ENCODE measurements at regions of chr15 and their contacts with region 1.

Region 1: DNA sequence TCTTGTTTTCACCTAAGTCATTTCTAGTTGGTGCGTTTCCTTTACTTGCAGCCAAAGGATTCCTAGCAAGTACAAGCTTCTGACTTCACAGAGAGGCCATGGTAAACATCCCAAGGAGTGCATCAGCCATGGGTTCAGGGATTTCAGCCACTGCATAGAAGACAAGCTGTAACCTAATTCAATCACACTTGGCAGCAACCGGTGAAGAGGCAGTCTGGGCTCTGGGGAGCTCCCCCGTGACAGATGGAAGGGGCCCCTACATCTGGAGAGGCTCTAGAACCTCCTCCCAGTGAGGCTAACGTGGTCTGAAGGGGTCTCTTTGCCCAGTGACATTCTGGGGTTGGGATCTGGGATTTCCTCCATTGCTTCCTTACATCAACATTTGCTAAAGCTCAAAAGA is 8.4 kb upstream of the SNRPA1 start:
- DNase-seq: no peak
- H3K4me3 ChIP-seq: no peak overlapping the region
- CTCF ChIP-seq: no peak

Region 2: DNA sequence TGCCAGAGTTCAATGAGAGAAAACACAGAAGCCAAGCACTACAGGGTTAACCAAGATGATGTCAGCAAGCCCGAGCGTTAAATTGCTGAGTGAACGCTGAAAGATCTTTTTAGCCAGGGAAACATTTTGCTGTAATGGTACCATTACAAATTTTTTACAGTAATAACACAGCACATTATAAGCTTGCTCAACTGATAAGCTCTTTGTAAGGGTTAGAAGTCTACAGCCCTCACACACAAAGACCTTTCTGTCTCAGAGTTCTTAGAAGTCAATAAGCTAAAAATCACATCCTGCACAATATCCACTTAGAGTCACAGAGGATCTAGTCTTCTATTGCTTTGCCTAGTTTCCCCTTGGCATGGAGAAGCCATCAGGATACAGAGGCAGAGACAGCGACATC is 81.5 kb before region 1 on chr15:
- CTCF ChIA-PET with region 1: no interaction called
- POLR2A ChIA-PET with region 1: no interaction called
- DNase-seq: no peak
- H3K4me3 ChIP-seq: no peak overlapping the region
- CTCF ChIP-seq: no peak

Region 3: DNA sequence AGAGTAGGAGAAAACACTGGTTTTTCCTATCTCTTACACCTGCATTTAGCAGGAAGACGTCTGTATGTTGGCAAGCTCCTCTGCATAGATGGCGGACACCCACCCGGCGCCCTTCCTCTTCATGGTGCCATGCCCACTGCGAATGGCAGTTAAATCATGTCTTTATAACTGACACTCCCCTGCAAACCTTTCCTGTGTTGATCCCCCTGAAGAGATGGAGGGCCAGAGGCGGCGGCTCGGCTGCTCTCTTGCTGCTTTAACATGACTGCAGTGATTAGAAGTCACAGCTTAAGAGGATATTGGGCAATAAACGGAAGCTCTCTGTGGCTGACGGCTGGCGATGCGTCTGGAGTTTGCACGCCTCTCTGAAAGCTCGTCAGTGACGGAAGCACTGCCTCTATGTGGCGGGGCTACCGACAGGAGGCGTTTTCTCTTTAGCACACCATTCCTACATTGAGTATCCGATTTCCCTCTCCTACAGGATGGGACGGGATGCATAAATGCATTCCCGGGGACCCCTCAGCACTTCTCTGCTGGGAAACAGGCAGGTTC is 17.2 kb after region 1 on chr15:
- CTCF ChIA-PET with region 1: interaction called, 18 read pairs
- POLR2A ChIA-PET with region 1: no interaction called
- DNase-seq: no peak
- H3K4me3 ChIP-seq: no peak overlapping the region; the same call in 1 of the 2 replicates
- CTCF ChIP-seq: peak; percentile 38

Region 4: GRCh38 chr15:101342056-101342455 is 38.6 kb after region 1 on chr15:
- CTCF ChIA-PET with region 1: no interaction called
- POLR2A ChIA-PET with region 1: no interaction called
- DNase-seq: no peak
- H3K4me3 ChIP-seq: no peak overlapping the region
- CTCF ChIP-seq: no peak

Region 5: GRCh38 chr15:101501703-101502373 is 198.4 kb after region 1 on chr15:
- CTCF ChIA-PET with region 1: interaction called, 12 read pairs
- POLR2A ChIA-PET with region 1: no interaction called
- DNase-seq: no peak
- H3K4me3 ChIP-seq: no peak overlapping the region
- CTCF ChIP-seq: peak; percentile 61